RWPE1 (cell line): ENCODE measurements at regions of chr21 and their contacts with region 1.

Region 1: GRCh38 chr21:45069711-45070542 is 4.5 kb upstream of the ADARB1 start:
- DNase-seq: no peak
- H3K27ac ChIP-seq: peak overlapping the region; percentile 15
- CTCF ChIP-seq: no peak

Region 2: GRCh38 chr21:45117314-45117713 is 47.4 kb after region 1 on chr21:
- CTCF ChIA-PET with region 1: interaction called, 13 read pairs
- POLR2A ChIA-PET with region 1: no interaction called
- DNase-seq: no peak
- H3K27ac ChIP-seq: no peak overlapping the region
- CTCF ChIP-seq: no peak